Left colon (tissue), 2 donors: ENCODE measurements at regions of chr15 and their contacts with region 1.

Region 1: GRCh38 chr15:58064980-58065444 is 499 bp downstream of the ALDH1A2 start:
- DNase-seq: peak in 1 of 2 donors; percentile 17
- ATAC-seq: no peak

Region 2: DNA sequence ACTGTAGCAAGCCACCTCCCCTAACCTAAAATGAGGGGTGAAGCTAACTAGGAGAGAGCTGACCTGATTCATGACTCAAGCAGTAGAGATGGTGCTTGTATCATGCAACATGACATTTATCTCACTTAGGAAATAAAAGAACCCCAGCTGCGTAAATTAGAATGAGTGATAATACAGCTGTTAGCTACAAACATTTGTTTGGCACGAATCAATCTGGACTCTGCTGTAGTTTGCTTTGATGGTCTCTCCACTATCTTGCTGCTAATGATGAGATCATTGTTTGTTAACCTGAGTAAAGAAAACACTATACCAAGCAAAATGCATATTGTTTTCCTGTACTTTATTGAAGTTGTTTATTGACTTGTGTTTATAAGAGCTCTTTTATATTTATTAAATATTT is 92.1 kb before region 1 on chr15:
- intact Hi-C with region 1: loop called in 1 of 2 experiments (anchors 5 kb)
- DNase-seq: no peak
- ATAC-seq: no peak